GM10248 (cell line): ENCODE measurements at regions of chr3 and their contacts with region 1.

Region 1: GRCh38 chr3:196192036-196192523 is 19.1 kb downstream of the ZDHHC19 start:
- DNase-seq: peak; percentile 60
- CTCF ChIP-seq: no peak

Region 2: GRCh38 chr3:196179380-196180308 is 12.4 kb before region 1 on chr3:
- CTCF ChIA-PET with region 1: interaction called, 23 read pairs
- POLR2A ChIA-PET with region 1: interaction called, 3 read pairs
- DNase-seq: peak; percentile 84
- CTCF ChIP-seq: peak; percentile 34

Region 3: DNA sequence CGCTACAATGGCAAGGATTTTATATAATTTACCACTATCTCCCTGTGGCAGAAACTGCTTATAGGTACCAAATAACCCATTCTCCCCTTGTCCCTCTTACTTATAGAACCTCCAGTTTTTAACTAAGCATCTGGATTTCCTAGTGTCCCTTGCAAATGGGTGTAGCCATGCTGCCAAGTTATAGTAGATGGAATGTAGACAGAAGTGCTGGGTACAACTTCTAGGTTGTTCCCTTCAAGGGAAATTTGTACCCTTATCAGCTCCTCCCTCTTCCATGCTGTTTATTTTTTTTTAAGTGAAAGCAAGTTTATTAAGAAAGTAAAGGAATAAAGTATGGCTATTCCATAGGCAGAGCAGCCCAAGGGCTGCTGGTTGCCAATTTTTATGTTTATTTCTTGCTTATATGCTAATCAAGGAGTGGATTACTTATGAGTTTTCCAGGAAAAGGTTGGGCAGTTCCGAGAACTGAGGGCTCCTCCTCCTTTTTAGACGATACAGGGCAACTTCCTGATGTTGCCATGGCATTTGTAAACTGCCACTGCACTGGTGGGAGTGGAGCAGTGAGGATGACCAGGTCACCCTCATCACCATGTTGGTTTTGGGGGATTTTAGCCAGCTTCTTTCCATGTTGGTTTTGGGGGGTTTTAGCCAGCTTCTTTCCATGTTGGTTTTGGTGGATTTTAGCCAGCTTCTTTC is 186.2 kb after region 1 on chr3:
- CTCF ChIA-PET with region 1: no interaction called
- POLR2A ChIA-PET with region 1: no interaction called
- DNase-seq: no peak
- CTCF ChIP-seq: no peak

Region 4: GRCh38 chr3:197835509-197835908 is 1643.4 kb after region 1 on chr3:
- CTCF ChIA-PET with region 1: no interaction called
- POLR2A ChIA-PET with region 1: interaction called, 11 read pairs
- DNase-seq: peak; percentile 46
- CTCF ChIP-seq: no peak